CD4-positive, alpha-beta T cell (primary cell): ENCODE measurements at regions of chr14 and their contacts with region 1.

Region 1: DNA sequence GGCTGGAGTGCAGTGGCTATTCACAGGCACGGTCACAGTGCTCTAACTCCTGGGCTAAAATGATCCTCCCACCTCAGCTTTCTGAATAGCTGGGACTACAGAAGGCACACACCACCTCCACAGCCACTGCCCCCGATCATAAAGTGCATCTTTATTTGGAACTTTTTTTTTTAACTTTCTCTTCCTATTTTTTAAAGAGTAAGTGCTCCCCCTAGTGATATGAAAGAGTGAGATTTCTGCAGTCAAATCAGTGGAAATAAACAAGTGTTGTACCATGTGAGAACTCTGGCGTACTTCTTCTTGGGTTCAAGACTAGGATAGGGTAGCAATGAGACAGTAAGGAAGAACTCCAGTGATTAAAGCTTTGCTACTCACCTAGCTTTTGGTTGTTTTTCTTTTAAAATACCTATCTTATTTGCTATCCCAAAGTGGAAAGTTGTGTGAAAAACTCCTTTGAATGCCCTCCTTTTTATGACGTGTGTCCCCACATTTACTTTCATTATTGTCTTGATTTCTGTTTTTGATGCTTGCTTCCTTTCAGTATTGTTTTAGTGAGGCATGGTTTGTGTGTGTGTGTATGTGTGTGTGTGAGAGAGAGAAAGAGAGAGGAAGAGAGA is 6.6 kb downstream of the PPP4R4 start:
- DNase-seq: peak in 4 of 14 experiments; percentile 25 to 80 (median 77)
- ATAC-seq: peak; percentile 86
- H3K4me3 ChIP-seq: peak overlapping the region; percentile 11
- H3K4me3 Mint-ChIP-seq: peak overlapping the region; percentile 43
- H3K27ac ChIP-seq: no peak overlapping the region
- H3K27ac Mint-ChIP-seq: peak overlapping the region; percentile 71
- H3K4me1 ChIP-seq: peaks cover 3% of the 10 kb centered on the region
- H3K4me1 Mint-ChIP-seq: peaks cover 24% of the 10 kb centered on the region
- H3K27me3 ChIP-seq: no peaks in the 10 kb centered on the region
- H3K27me3 Mint-ChIP-seq: peaks cover 13% of the 10 kb centered on the region
- CTCF ChIP-seq: peak; percentile 71

Region 2: GRCh38 chr14:94036313-94037050 is 144.3 kb before region 1 on chr14:
- CTCF ChIA-PET with region 1: interaction called, 15 read pairs
- POLR2A ChIA-PET with region 1: interaction called, 7 read pairs
- intact Hi-C with region 1: loop called (anchors 1 to 2 kb)
- DNase-seq: peak; percentile 60 to 86 (median 70)
- ATAC-seq: peak; percentile 97
- H3K4me3 ChIP-seq: no peak overlapping the region
- H3K4me3 Mint-ChIP-seq: no peak overlapping the region
- H3K27ac ChIP-seq: no peak overlapping the region
- H3K27ac Mint-ChIP-seq: no peak overlapping the region
- H3K4me1 ChIP-seq: peaks cover 4% of the 10 kb centered on the region
- H3K4me1 Mint-ChIP-seq: peaks cover 4% of the 10 kb centered on the region
- H3K27me3 ChIP-seq: no peaks in the 10 kb centered on the region
- H3K27me3 Mint-ChIP-seq: no peaks in the 10 kb centered on the region
- CTCF ChIP-seq: peak; percentile 86

Region 3: GRCh38 chr14:94051115-94051514 is 129.6 kb before region 1 on chr14:
- CTCF ChIA-PET with region 1: no interaction called
- POLR2A ChIA-PET with region 1: no interaction called
- intact Hi-C with region 1: loop called in 1 of 2 experiments (anchors 2 kb)
- DNase-seq: peak in 1 of 14 experiments; percentile 23
- ATAC-seq: no peak
- H3K4me3 ChIP-seq: no peak overlapping the region
- H3K4me3 Mint-ChIP-seq: no peak overlapping the region
- H3K27ac ChIP-seq: no peak overlapping the region
- H3K27ac Mint-ChIP-seq: peak overlapping the region; percentile 69
- H3K4me1 ChIP-seq: no peaks in the 10 kb centered on the region
- H3K4me1 Mint-ChIP-seq: peaks cover 22% of the 10 kb centered on the region
- H3K27me3 ChIP-seq: no peaks in the 10 kb centered on the region
- H3K27me3 Mint-ChIP-seq: no peaks in the 10 kb centered on the region
- CTCF ChIP-seq: no peak

Region 4: GRCh38 chr14:94129111-94129757 is 51.5 kb before region 1 on chr14 and contains the start of gene IFI27L2:
- CTCF ChIA-PET with region 1: interaction called, 5 read pairs
- POLR2A ChIA-PET with region 1: interaction called, 4 read pairs
- intact Hi-C with region 1: loop called (anchors 1 kb)
- DNase-seq: peak; percentile 27 to 84 (median 51)
- ATAC-seq: peak; percentile 93
- H3K4me3 ChIP-seq: peak within 1 kb of the TSS; percentile 73
- H3K4me3 Mint-ChIP-seq: peak within 1 kb of the TSS; percentile 88
- H3K27ac ChIP-seq: peak within 1 kb of the TSS in 1 of 2 donors; percentile 19
- H3K27ac Mint-ChIP-seq: peak within 1 kb of the TSS; percentile 45
- H3K4me1 ChIP-seq: peaks cover 18% of the 10 kb centered on the region
- H3K4me1 Mint-ChIP-seq: peaks cover 20% of the 10 kb centered on the region
- H3K27me3 ChIP-seq: no peaks in the 10 kb centered on the region
- H3K27me3 Mint-ChIP-seq: no peaks in the 10 kb centered on the region
- CTCF ChIP-seq: peak; percentile 41
- total RNA-seq, gene IFI27L2: 21.5 to 22.2 TPM

Region 5: DNA sequence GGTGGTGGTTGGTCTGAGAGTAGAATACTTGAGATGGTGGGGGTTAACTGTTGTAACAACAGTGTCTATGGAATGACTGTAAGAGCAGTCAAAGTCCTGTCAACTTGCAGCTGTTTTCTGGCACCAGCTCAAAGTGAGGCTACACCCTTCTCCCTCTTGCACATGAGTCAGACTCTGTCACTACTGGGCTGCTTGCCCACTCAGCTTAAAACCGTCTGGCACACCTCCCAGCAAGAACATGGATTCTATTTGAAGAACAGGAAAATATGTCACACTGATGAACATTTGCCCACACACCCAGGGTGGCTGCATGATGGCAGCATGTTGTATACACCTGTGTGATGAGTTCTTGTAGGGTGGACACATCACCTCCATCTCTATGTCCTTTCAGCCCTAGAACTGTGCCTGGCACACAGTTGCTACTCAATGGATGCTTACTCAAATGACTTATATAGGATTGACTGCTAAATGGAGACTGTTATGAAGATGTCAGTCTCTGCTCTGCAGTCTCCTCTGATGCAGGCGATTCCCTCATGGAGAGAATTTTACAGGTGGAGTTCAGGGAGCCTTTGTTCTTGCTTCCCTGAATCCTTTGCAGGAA is 161.7 kb after region 1 on chr14:
- CTCF ChIA-PET with region 1: no interaction called
- POLR2A ChIA-PET with region 1: no interaction called
- intact Hi-C with region 1: no loop called
- DNase-seq: peak in 2 of 14 experiments; percentile 29 to 62
- ATAC-seq: peak; percentile 15
- H3K4me3 ChIP-seq: no peak overlapping the region
- H3K4me3 Mint-ChIP-seq: no peak overlapping the region
- H3K27ac ChIP-seq: no peak overlapping the region
- H3K27ac Mint-ChIP-seq: no peak overlapping the region
- H3K4me1 ChIP-seq: peaks cover 17% of the 10 kb centered on the region
- H3K4me1 Mint-ChIP-seq: peaks cover 30% of the 10 kb centered on the region
- H3K27me3 ChIP-seq: peaks cover 0 to 4% of the 10 kb centered on the region in 2 experiments
- H3K27me3 Mint-ChIP-seq: peaks cover 7% of the 10 kb centered on the region
- CTCF ChIP-seq: no peak